Sigmoid colon (tissue), 7 donors: ENCODE measurements at regions of chr7 and their contacts with region 1.

Region 1: DNA sequence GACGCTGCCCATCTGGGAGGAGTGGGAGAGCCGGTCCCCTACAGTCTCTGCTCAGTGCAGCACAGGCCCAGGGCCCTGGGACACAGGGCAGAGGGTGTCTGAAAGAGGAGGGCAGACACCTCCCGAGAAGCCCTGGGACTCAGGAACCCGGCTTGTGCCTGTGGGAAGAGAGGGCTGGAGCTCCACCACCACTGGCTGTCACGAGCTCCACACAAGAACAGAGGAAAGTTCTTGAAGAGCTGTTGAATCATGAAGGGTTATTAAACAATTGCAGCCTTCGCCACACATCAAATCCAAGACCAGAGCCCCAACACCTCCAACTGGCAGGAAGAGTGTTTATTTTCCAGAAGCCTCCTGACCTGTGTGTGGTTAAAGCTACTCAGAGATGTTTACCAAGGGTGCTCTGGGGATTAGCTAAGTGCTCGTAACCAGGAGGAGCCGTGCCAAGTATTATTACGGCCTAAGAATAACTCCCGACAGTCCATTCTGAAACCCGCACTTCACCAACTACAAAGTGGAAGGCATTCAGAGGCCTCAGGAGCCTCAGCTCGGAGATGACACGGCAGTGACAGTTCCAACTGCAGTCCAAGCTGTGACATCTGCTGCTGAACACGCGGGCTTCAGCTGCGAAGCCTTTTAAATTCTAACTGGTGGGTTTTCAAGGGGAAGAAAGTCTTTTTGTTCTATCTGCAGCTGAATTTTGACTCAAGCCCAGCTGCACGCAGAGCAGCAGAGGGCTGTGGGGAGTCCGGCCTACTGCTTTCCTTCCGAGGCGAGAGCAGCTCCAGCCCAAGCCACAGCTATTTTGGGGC is 75.1 kb downstream of the MAD1L1 start:
- DNase-seq: peak; percentile 93
- H3K4me3 ChIP-seq: peak overlapping the region in 1 of 4 donors; percentile 5
- H3K27ac ChIP-seq: peak overlapping the region; percentile 78 to 87 (median 84)
- H3K4me1 ChIP-seq: peaks cover 0 to 43% (median 36%) of the 10 kb centered on the region in 4 donors
- H3K27me3 ChIP-seq: no peaks in the 10 kb centered on the region
- CTCF ChIP-seq: no peak
- EP300 ChIP-seq: peak; percentile 43 to 90 (median 62)
- POLR2A ChIP-seq: no peak

Region 2: DNA sequence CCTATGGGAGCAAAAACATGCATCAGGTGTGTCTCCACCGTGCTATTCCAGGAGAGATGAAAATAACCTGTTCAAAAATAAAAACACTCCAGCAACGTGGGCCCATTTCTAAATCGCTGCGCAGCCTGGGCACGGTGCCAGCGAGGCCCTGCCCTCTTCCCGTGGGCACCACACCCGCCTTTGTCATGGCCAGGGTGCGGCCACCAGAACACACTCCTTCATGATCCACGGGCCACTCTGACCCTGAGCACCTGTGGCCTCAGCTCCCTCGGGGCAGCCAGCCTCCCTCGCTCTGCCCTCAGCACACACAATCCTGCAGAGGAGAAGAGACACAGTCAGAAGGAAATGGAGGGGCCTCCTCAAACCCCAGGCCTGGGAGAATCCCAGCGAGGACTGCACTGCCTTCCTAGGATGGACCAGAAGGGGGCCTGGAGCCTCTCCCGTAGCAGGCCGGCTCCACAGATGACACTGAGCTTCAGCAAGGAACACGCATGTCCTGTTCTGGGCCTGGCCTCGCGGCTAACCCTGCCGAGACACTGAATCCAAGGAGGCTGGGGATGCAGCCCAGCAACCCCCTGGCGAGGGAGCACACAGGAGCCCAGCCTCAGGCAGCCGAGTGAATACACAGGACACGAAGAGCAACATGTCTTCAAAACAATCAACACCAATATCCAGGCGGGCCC is 94.0 kb before region 1 on chr7:
- intact Hi-C with region 1: no loop called
- DNase-seq: no peak
- H3K4me3 ChIP-seq: no peak overlapping the region
- H3K27ac ChIP-seq: no peak overlapping the region
- H3K4me1 ChIP-seq: peaks cover 0 to 8% (median 0%) of the 10 kb centered on the region in 4 donors
- H3K27me3 ChIP-seq: no peaks in the 10 kb centered on the region
- CTCF ChIP-seq: no peak
- EP300 ChIP-seq: no peak
- POLR2A ChIP-seq: no peak

Region 3: DNA sequence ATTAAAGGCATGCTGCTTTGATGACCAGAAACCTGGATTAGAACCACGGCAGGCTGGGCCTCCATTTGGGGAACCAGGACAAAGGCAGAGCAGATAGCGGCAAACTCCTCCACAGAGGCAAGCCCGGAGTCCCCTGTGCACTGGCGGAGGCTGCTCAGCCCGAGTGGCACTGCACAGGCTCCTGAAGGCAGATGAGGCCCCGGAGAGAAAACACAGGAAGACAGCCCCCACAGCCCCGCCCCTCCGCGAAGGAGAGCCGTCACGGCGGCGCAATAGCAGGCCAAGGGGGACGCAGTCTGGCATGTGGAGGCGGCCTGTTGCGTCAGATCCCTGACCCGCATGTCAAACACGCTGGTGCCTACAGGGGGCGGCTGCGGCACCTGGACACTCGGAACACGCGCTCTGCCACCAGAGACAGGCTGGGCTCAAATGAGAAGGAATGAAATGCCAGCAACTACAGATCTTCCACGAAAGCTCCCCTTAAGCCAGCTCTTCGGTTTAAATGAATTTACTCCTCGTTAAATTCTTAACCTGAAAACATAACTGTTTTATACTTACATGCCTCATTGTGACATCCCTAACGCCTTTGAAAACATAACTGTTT is 53.5 kb before region 1 on chr7:
- intact Hi-C with region 1: loop called (anchors 1 kb)
- DNase-seq: peak; percentile 97
- H3K4me3 ChIP-seq: peak overlapping the region in 3 of 4 donors; percentile 15 to 24 (median 23)
- H3K27ac ChIP-seq: peak overlapping the region; percentile 56 to 77 (median 72)
- H3K4me1 ChIP-seq: peaks cover 0 to 32% (median 27%) of the 10 kb centered on the region in 4 donors
- H3K27me3 ChIP-seq: no peaks in the 10 kb centered on the region
- CTCF ChIP-seq: peak; percentile 65 to 82 (median 76)
- EP300 ChIP-seq: peak in 2 of 4 donors; percentile 34 to 69
- POLR2A ChIP-seq: no peak

Region 4: GRCh38 chr7:2118630-2119190 is 39.0 kb before region 1 on chr7:
- intact Hi-C with region 1: loop called (anchors 2 kb)
- DNase-seq: no peak
- H3K4me3 ChIP-seq: no peak overlapping the region
- H3K27ac ChIP-seq: no peak overlapping the region
- H3K4me1 ChIP-seq: peaks cover 0 to 31% (median 30%) of the 10 kb centered on the region in 4 donors
- H3K27me3 ChIP-seq: no peaks in the 10 kb centered on the region
- CTCF ChIP-seq: no peak
- EP300 ChIP-seq: no peak
- POLR2A ChIP-seq: no peak